ENCODE measurements at regions of chr7 and their contacts with region 1.

Region 1: DNA sequence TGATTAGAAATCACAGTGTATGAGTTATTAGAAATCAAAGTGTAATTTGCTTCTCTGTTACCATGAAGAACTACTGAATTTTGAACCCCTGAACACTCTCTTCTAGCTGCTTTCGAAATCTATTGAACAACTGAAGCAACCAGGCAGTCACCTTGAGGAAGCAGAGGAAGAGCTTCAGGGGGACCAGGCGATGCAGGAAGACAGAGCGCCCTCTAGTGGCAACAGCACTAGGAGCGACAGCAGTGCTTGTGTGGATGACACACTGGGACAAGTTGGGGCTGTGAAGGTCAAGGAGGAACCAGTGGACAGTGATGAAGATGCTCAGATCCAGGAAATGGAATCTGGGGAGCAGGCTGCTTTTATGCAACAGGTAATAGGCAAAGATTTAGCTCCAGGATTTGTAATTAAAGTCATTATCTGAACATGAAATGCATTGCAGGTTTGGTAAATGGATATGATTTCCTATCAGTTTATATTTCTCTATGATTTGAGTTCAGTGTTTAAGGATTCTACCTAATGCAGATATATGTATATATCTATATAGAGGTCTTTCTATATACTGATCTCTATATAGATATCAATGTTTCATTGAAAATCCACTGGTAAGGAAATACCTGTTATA is 170.7 kb downstream of the HDAC9 start:
- DNase-seq: no peak
- H3K4me3 ChIP-seq: no peak overlapping the region
- H3K27me3 ChIP-seq: no peaks in the 10 kb centered on the region
- CTCF ChIP-seq: peak; percentile 96

Region 2: DNA sequence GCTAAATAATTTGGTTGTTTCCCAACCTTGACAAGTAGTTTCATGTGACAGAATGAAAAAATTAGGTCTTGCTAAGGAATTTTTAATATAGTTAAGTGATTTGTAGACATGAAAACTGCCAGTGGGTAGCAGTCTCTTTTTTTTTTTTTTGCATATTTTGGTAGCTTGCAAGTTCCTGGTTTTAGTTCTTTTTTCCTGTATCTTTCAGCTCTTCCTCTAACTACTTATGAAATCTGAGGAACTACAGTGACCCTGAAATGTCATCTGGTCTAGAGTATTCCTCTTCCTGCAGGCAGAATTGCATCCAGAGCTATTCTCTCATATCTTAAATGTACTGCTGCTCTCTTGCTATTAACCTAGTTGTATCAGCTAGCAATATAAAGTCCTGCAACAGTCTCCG is 10.3 kb before region 1 on chr7:
- CTCF ChIA-PET with region 1: interaction called, 14 read pairs
- POLR2A ChIA-PET with region 1: no interaction called
- DNase-seq: no peak
- H3K4me3 ChIP-seq: no peak overlapping the region
- H3K27me3 ChIP-seq: no peaks in the 10 kb centered on the region
- CTCF ChIP-seq: no peak

Region 3: GRCh38 chr7:18700147-18700546 is 33.9 kb after region 1 on chr7:
- CTCF ChIA-PET with region 1: no interaction called
- POLR2A ChIA-PET with region 1: no interaction called
- DNase-seq: no peak
- H3K4me3 ChIP-seq: no peak overlapping the region
- H3K27me3 ChIP-seq: no peaks in the 10 kb centered on the region
- CTCF ChIP-seq: no peak

Region 4: DNA sequence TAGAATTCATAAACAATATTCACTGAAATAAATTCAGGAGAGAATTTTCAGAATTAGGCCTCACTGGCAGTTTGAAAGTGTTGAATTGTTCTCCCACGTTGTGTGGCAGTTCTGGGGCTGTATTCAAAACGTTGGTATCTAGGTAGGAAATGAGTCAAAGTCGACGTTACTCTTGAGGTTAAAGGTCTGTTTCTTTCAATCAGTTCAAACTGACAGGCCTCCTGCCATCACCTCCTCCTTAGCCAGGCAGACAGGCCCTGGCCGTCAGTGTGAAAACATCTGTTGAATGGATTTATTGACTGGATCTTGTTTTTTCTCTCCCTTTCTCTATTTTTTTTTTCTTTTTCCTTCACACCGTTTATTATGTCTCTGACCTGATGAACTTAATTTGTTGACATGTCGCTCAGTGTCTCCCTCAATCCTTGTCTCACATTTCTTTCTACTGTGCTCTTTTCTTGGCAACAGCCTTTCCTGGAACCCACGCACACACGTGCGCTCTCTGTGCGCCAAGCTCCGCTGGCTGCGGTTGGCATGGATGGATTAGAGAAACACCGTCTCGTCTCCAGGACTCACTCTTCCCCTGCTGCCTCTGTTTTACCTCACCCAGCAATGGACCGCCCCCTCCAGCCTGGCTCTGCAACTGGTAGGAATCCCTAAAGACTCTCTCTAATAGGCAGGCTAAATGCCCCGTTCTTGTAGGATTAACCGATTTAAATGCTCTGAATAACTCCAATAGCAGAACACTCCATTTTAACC is 61.1 kb after region 1 on chr7:
- CTCF ChIA-PET with region 1: no interaction called
- POLR2A ChIA-PET with region 1: no interaction called
- DNase-seq: no peak
- H3K4me3 ChIP-seq: no peak overlapping the region
- H3K27me3 ChIP-seq: no peaks in the 10 kb centered on the region
- CTCF ChIP-seq: no peak

Region 5: DNA sequence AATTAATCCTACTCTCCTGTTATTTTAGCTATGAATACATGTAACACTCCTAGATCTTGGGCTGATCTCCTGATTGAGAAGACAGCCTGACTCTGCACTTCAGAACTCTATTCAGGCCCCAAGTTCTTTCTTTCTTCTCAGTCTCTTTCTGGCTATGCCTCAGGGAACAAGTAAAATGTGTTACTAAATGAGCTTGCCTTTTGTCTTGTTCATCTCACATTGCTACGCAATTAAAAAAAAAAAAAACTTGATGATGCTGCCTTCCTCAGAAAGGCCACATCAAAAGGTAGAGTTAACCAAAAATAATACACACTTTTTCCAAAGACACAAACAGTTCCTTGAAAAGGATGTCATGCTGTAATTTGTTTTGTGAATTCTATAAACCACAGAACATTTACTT is 193.1 kb after region 1 on chr7:
- CTCF ChIA-PET with region 1: no interaction called
- POLR2A ChIA-PET with region 1: no interaction called
- DNase-seq: no peak
- H3K4me3 ChIP-seq: no peak overlapping the region
- H3K27me3 ChIP-seq: no peaks in the 10 kb centered on the region
- CTCF ChIP-seq: no peak